A673 (cell line): ENCODE measurements at regions of chr12 and their contacts with region 1.

Region 1: DNA sequence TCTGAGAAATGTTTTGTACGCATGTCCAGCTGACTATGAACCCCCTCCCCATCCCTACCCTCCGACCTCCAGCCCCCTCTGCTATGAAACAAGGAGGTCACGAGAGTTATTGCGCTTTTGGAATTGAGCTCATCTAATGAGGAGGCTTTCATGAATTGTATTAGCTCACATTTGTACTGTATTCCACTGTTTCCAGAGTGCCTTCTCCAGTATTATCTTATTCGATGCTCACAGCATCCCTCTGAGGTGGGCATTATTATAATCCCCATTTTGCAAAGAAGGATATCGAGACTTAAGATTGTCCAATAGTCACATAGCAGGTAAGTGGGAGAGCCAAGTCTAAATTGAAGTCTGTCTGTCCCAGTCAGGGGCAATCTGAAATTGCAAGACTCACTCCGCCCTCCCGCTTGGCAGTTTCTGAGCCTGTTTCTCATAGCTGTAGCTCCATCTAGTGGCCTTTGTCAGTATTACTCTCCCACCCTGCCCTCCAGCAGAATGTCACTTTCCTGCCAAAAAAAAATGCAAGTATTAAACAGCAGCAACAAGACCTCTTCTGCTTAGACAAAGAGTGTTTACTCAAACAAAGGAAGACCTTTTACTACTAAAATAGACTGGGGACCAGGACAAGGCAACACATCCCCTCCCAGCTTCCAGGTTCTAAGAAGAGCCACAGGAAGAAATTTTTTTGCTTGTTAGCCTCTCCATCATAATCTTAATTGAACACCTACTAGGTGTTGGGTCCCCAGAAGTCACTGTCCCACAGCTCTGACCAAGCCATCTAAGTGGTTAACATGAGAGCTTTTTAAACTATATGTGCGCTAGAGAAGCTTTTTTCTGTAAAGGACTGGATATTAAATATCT is 48.6 kb upstream of the TMEM233 start:
- DNase-seq: peak; percentile 82
- H3K4me3 ChIP-seq: no peak overlapping the region
- H3K27ac ChIP-seq: no peak overlapping the region
- H3K4me1 ChIP-seq: no peaks in the 10 kb centered on the region
- H3K27me3 ChIP-seq: no peaks in the 10 kb centered on the region
- CTCF ChIP-seq: peak; percentile 89

Region 2: GRCh38 chr12:118068465-118068864 is 1476.5 kb before region 1 on chr12:
- CTCF ChIA-PET with region 1: interaction called, 12 read pairs
- POLR2A ChIA-PET with region 1: no interaction called
- intact Hi-C with region 1: no loop called
- DNase-seq: no peak
- H3K4me3 ChIP-seq: no peak overlapping the region
- H3K27ac ChIP-seq: no peak overlapping the region
- H3K4me1 ChIP-seq: peaks cover 4% of the 10 kb centered on the region
- H3K27me3 ChIP-seq: no peaks in the 10 kb centered on the region
- CTCF ChIP-seq: no peak

Region 3: DNA sequence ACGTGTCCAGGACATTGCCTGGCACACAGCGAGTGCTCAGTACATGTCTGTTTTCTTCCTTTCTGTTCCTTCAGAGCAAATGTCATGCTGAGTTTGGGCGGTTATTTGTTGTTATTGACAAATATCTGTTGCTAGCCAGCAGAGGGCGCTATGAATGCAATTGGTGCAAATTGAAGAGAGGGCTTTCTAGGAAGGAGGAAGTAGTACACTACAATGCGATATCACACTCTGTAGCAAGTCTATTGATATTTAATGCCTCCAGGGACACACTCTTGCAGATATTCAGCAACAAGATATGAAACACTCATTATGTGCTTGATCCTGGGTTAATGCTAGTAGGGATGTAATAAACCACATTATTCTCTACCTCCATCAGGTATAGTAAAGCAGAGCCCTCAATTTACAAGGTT is 830.9 kb before region 1 on chr12:
- CTCF ChIA-PET with region 1: no interaction called
- POLR2A ChIA-PET with region 1: no interaction called
- intact Hi-C with region 1: loop called (anchors 10 kb)
- DNase-seq: peak; percentile 66
- H3K4me3 ChIP-seq: no peak overlapping the region
- H3K27ac ChIP-seq: no peak overlapping the region
- H3K4me1 ChIP-seq: no peaks in the 10 kb centered on the region
- H3K27me3 ChIP-seq: peaks cover 14% of the 10 kb centered on the region
- CTCF ChIP-seq: peak; percentile 76

Region 4: DNA sequence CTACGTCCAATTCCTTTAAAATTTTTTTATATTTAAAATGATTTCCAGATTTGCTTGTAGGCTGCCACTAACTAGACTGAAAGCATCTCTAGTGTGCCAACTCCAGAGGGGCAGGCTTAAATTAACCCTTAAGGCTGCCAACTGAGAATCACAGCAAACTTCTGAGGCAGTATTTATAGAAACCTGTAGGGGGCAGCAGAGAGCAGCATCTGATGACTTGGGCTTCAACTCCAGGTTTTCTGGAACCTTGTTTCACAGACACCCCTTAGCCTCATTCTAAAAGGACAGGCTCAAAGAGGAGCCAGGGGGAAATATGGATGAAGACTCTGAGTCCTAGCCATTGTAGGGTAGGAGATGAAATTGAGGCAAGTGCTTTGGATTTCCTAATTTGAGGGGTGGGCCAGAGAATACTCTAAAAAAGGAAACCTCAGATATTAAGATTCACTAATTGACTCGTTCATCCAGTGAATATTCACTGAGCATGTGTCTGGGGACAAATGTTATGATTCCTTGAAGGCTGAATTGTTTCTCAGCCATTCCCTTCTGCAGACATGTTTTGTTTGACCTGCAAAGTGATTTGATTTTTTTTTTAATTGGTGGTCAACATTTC is 429.6 kb before region 1 on chr12:
- CTCF ChIA-PET with region 1: no interaction called
- POLR2A ChIA-PET with region 1: no interaction called
- intact Hi-C with region 1: loop called (anchors 10 kb)
- DNase-seq: peak; percentile 66
- H3K4me3 ChIP-seq: no peak overlapping the region
- H3K27ac ChIP-seq: no peak overlapping the region
- H3K4me1 ChIP-seq: no peaks in the 10 kb centered on the region
- H3K27me3 ChIP-seq: peaks cover 31% of the 10 kb centered on the region
- CTCF ChIP-seq: peak; percentile 89

Region 5: GRCh38 chr12:119249326-119250155 is 295.5 kb before region 1 on chr12:
- CTCF ChIA-PET with region 1: no interaction called
- POLR2A ChIA-PET with region 1: no interaction called
- intact Hi-C with region 1: no loop called
- DNase-seq: no peak
- H3K4me3 ChIP-seq: no peak overlapping the region
- H3K27ac ChIP-seq: no peak overlapping the region
- H3K4me1 ChIP-seq: no peaks in the 10 kb centered on the region
- H3K27me3 ChIP-seq: peaks cover 62% of the 10 kb centered on the region
- CTCF ChIP-seq: no peak

Region 6: DNA sequence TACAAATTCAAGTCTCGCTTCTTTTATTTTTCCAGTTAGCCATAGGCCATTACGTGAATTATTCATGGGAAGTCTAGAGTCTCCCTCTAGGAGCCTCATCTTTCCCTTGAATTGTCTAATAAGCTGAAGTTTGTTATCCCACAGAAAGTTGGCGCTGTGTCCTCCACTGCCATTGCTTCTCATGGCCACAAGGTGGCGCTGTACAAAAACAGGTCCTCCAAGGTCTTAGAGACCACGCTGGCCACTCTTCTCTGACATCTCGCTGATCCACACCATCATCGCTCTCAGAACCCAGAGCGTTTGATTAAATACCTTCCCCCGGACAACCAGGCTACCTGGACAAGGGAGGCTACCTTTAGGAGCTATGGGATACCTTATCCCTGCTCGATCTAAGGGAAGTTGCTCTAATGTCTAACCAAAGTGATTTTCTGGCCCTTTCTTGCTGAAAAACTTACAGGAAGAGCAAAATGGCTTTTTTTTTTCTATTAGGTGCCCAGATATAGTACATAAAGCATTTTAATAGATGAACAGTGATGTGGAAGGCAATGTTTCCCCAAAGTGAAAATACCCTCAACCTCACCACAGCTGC is 100.4 kb before region 1 on chr12:
- CTCF ChIA-PET with region 1: interaction called, 8 read pairs
- POLR2A ChIA-PET with region 1: no interaction called
- intact Hi-C with region 1: loop called (anchors 2 kb)
- DNase-seq: peak; percentile 88
- H3K4me3 ChIP-seq: no peak overlapping the region
- H3K27ac ChIP-seq: no peak overlapping the region
- H3K4me1 ChIP-seq: no peaks in the 10 kb centered on the region
- H3K27me3 ChIP-seq: no peaks in the 10 kb centered on the region
- CTCF ChIP-seq: peak; percentile 99

Region 7: GRCh38 chr12:119649202-119649808 is 104.3 kb after region 1 on chr12:
- CTCF ChIA-PET with region 1: no interaction called
- POLR2A ChIA-PET with region 1: no interaction called
- intact Hi-C with region 1: loop called (anchors 1 kb)
- DNase-seq: peak; percentile 66
- H3K4me3 ChIP-seq: no peak overlapping the region
- H3K27ac ChIP-seq: no peak overlapping the region
- H3K4me1 ChIP-seq: no peaks in the 10 kb centered on the region
- H3K27me3 ChIP-seq: no peaks in the 10 kb centered on the region
- CTCF ChIP-seq: peak; percentile 88